ENCODE measurements at regions of chr5 and their contacts with region 1.

Region 1: GRCh38 chr5:108748401-108749127 is 867 bp downstream of the FER start:
- DNase-seq: peak; percentile 99
- ATAC-seq: peak; percentile 97 to 100 (median 98)
- H3K4me3 ChIP-seq: peak overlapping the region; percentile 72 to 99 (median 92)
- H3K27ac ChIP-seq: peak overlapping the region; percentile 95 to 100 (median 98)
- H3K4me1 ChIP-seq: peaks cover 0 to 31% (median 14%) of the 10 kb centered on the region in 9 donors
- H3K27me3 ChIP-seq: no peaks in the 10 kb centered on the region
- CTCF ChIP-seq: peak in 3 of 9 donors; percentile 23 to 48 (median 41)

Region 2: DNA sequence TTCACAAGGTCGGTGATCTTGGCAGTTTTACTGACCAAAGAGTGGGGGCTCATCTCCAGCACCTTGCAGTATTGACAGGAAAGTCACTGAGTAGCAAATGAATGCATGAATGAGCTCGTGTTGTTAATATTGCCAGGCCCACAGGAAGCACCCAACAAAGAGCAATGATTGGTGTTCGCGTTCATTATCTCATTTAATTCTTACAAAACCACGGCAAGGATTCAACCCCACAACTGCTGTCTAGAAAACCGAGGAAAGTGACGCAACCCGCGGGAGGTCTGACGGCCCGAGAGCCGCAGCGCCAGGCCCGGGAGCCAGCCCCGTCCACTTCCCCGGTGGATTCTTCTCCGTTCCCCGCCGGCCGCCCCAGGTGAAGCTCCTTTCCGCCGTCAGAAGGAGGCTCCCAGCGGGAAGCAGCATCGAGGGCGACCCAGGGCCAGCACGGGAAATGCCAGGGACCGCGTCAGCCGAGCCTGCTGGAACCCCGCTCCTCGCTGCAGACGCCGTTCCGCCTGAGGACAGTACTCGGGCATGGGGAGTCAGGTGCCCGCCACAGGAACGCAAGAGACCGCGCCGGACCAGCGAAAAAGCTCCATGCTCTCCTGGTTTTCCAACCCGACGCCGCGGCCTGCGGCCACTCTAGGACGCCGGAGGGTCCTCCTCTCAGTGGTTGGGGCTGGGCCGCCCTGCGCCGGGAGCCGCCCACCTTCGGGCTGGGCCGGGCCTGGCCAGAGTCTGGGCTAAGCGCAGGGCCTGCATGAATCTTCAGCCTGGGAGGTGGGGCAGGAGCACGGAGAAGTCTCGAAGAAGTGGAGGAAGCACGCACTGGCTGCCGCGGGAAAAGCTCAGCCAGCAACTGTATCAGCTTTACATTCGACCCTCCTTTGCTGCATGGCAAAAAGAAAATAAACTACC is 20.7 kb before region 1 on chr5:
- intact Hi-C with region 1: loop called in 6 of 10 experiments (anchors 1 to 2 kb)
- DNase-seq: peak; percentile 90 to 93
- ATAC-seq: peak; percentile 100
- H3K4me3 ChIP-seq: peak overlapping the region; percentile 74 to 98 (median 88)
- H3K27ac ChIP-seq: peak overlapping the region; percentile 72 to 97 (median 94)
- H3K4me1 ChIP-seq: peaks cover 0 to 36% (median 6%) of the 10 kb centered on the region in 9 donors
- H3K27me3 ChIP-seq: no peaks in the 10 kb centered on the region
- CTCF ChIP-seq: peak in 2 of 9 donors; percentile 23 to 40